ENCODE measurements at regions of chr2 and their contacts with region 1.

Region 1: GRCh38 chr2:237512774-237513466 is 25.9 kb downstream of the MLPH start:
- DNase-seq: peak; percentile 92

Region 2: DNA sequence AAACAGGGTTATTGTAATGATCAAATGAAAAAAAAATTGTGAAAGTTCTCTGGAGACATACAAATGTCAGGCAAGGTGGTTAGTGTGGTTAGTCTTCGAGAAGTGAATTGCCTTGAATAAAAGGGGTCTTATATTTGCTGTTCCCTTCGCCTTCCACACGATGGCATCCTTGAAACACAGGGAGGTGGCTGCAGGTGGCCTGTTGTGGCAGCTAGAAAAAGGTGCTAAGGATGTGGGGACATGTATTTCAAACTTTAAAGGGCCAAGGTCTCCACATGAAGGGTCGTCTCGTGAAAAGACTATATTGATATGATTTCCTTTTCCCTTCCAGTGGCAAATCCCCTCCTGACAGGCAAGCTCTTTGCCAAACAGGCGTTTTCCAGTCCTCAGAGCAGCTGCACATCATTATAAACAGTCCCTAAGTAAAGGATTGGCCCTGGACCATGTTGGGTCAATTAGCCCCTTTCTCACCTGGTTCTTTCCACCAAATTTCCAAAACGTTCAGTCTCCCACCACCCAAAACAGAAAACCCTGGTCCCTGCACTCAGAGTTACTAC is 358.8 kb before region 1 on chr2:
- in situ Hi-C with region 1: loop called (anchors 25 kb)
- DNase-seq: peak; percentile 58

Region 3: GRCh38 chr2:237374284-237375060 is 138.4 kb before region 1 on chr2:
- in situ Hi-C with region 1: no loop called
- DNase-seq: no peak

Region 4: GRCh38 chr2:237723602-237724001 is 210.7 kb after region 1 on chr2:
- in situ Hi-C with region 1: no loop called
- DNase-seq: peak; percentile 37

Region 5: DNA sequence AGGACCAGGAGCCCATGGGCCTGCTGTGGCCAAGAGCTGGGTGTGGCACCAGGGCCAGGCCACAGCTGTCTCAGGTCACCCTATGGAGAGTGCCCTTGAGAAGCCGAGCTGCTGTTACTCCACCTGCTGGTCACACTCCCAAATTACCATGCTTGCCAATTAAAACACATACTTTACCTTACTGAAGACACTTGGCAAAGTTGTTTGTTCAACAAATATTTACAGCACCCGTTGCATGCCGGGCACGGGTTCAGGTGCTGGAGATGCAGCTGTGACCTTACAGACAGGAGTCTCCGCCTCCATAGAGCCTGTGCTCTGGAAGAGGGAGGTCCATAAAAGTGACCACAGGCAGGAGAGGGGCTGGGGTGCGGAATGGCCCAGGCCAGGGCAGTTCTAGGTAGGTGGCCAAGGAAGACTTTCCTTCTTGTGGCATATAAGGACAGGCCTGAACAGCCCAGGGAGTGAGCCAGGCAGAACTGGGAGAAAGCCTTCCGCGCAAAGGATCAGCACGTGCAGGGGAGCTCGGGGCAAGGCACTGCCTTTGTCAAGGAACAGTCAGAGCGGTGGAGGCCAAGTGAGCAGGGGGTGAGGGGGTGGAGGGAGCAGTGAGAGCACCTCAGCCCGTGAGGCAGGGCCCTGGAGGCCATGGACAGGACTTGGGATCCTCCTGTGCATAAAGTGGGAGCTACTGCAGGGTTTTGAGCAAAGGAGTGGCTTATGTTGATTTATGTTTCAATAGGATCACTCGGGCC is 262.1 kb after region 1 on chr2:
- in situ Hi-C with region 1: no loop called
- DNase-seq: peak; percentile 64

Region 6: GRCh38 chr2:238158527-238159070 is 645.7 kb after region 1 on chr2 and contains the start of gene ERFE:
- in situ Hi-C with region 1: no loop called
- DNase-seq: peak; percentile 23

Measured in KBM-7 (cell line).